Calu3 (cell line): ENCODE measurements at regions of chr10 and their contacts with region 1.

Region 1: DNA sequence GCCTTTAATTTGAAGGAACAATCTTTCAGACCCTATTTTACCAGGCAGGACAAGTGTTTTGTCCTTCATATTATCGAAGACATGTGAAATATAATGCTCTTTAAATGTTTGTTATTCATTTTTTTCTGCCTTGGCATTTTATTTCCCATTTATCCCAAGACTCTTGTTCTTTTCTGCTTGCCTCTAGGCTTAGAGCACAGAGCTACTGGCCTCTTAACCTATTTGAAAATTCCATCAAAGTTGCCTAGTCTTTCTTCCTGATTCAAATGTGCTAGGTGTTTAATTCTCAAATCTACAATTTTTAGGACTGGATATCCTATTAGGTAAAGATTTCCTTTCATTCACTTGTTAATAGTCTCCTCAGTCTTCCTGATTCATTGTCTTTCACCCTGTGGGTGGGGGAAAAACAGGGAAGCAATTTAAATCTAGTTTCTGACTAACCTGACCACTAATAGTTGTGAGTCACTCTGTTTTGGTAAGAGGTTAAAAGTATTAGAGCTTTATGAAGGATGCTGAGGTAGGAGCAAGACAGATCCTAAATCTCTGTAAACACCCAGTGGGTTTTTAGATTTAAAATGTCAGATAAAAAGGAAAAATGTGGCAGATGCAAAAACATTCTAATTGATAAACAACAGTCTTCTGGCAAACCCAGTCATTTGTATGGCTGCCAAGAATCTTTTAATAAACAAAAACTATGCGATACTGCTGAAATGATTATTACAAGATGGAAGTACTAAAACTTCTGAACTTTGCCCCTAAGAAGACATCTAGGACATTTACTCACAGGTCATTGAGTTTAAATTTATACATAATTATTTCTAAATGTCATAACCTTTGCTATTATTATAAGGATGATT is 1.6 kb downstream of the LIPK start:
- DNase-seq: peak; percentile 22
- H3K4me3 Mint-ChIP-seq: no peak overlapping the region
- H3K27ac Mint-ChIP-seq: no peak overlapping the region
- H3K4me1 Mint-ChIP-seq: peaks cover 23% of the 10 kb centered on the region
- H3K27me3 Mint-ChIP-seq: no peaks in the 10 kb centered on the region
- CTCF ChIP-seq: no peak

Region 2: DNA sequence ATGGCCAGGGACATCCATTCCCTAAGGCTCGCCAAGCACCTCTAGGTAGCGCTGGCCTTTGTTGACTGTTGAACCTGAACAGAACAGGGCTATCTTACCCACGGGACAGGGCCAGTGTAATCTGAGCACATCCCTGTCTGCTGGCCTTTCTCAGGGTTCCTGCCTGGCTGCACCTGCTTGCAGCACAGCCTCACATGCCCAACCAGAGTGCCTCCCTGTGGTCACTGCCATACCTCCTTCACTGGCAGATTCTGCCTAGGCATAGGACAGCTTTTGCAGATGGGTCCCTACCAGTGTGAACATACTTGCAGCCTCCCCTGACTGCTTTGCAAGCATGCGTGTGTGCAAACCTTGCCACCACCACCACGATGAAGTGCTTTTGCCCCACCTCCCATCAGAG is 36.3 kb after region 1 on chr10:
- CTCF ChIA-PET with region 1: no interaction called
- intact Hi-C with region 1: loop called (anchors 5 kb)
- DNase-seq: peak; percentile 35
- H3K4me3 Mint-ChIP-seq: no peak overlapping the region
- H3K27ac Mint-ChIP-seq: no peak overlapping the region
- H3K4me1 Mint-ChIP-seq: no peaks in the 10 kb centered on the region
- H3K27me3 Mint-ChIP-seq: peaks cover 19% of the 10 kb centered on the region
- CTCF ChIP-seq: no peak